WTC11 (cell line): ENCODE measurements at regions of chrX and their contacts with region 1.

Region 1: GRCh38 chrX:154370882-154371770 is 3.3 kb downstream of the FLNA start:
- DNase-seq: peak; percentile 89
- ATAC-seq: peak; percentile 40
- H3K4me3 Mint-ChIP-seq: peak overlapping the region; percentile 75
- H3K27ac Mint-ChIP-seq: 0 out of 2 replicates have a peak overlapping the region, but pooled peaks have one; percentile 45
- H3K4me1 Mint-ChIP-seq: peaks cover 11% of the 10 kb centered on the region
- H3K27me3 Mint-ChIP-seq: peaks cover 6% of the 10 kb centered on the region
- CTCF ChIP-seq: no peak

Region 2: GRCh38 chrX:154298312-154298711 is 72.8 kb before region 1 on chrX:
- CTCF ChIA-PET with region 1: no interaction called
- POLR2A ChIA-PET with region 1: no interaction called
- DNase-seq: no peak
- ATAC-seq: no peak
- H3K4me3 Mint-ChIP-seq: no peak overlapping the region
- H3K27ac Mint-ChIP-seq: no peak overlapping the region
- H3K4me1 Mint-ChIP-seq: no peaks in the 10 kb centered on the region
- H3K27me3 Mint-ChIP-seq: no peaks in the 10 kb centered on the region
- CTCF ChIP-seq: no peak

Region 3: DNA sequence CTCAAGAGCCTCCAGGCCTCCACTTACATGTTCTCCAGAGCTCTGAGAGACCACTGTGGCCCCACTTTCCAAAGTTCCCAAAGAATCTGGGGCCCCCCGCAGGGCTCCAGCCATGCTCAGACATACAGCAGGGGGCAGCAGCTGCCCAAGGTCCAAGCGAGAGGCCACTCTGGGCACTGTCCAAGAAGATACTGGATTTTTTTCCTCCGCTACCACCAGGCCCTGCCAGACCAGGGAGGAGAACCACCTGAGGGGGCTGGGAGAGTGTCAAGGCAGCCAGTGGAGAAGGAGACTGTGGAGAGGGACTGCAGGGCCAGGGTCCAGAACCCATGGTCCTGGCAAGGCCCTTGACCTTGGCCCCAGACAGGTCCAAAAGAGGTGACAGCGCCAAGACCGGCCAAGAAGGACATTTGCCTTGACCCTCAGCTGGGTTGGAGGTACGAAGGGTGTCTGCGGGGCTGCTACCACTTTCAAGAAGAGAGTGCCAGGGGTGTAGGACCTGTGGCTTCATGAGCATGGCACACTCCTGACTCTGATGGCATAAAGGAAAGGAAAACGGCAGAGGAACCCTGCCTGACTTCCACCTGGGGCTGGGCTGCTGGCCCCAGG is 13.3 kb after region 1 on chrX:
- CTCF ChIA-PET with region 1: interaction called, 43 read pairs
- POLR2A ChIA-PET with region 1: interaction called, 13 read pairs
- DNase-seq: no peak
- ATAC-seq: no peak
- H3K4me3 Mint-ChIP-seq: no peak overlapping the region
- H3K27ac Mint-ChIP-seq: no peak overlapping the region
- H3K4me1 Mint-ChIP-seq: peaks cover 26% of the 10 kb centered on the region
- H3K27me3 Mint-ChIP-seq: no peaks in the 10 kb centered on the region
- CTCF ChIP-seq: no peak

Region 4: GRCh38 chrX:154411322-154411980 is 40.3 kb after region 1 on chrX and contains the start of gene TAFAZZIN:
- CTCF ChIA-PET with region 1: interaction called, 10 read pairs
- POLR2A ChIA-PET with region 1: no interaction called
- DNase-seq: peak; percentile 60
- ATAC-seq: peak; percentile 8; the same call in 1 of the 2 replicates
- H3K4me3 Mint-ChIP-seq: peak within 1 kb of the TSS; percentile 87
- H3K27ac Mint-ChIP-seq: peak within 1 kb of the TSS; percentile 88; the same call in 1 of the 2 replicates
- H3K4me1 Mint-ChIP-seq: peaks cover 12% of the 10 kb centered on the region
- H3K27me3 Mint-ChIP-seq: no peaks in the 10 kb centered on the region
- CTCF ChIP-seq: no peak
- total RNA-seq, gene TAFAZZIN: 43.5 to 48.6 TPM (median 44.5 TPM) in 3 replicates

Region 5: DNA sequence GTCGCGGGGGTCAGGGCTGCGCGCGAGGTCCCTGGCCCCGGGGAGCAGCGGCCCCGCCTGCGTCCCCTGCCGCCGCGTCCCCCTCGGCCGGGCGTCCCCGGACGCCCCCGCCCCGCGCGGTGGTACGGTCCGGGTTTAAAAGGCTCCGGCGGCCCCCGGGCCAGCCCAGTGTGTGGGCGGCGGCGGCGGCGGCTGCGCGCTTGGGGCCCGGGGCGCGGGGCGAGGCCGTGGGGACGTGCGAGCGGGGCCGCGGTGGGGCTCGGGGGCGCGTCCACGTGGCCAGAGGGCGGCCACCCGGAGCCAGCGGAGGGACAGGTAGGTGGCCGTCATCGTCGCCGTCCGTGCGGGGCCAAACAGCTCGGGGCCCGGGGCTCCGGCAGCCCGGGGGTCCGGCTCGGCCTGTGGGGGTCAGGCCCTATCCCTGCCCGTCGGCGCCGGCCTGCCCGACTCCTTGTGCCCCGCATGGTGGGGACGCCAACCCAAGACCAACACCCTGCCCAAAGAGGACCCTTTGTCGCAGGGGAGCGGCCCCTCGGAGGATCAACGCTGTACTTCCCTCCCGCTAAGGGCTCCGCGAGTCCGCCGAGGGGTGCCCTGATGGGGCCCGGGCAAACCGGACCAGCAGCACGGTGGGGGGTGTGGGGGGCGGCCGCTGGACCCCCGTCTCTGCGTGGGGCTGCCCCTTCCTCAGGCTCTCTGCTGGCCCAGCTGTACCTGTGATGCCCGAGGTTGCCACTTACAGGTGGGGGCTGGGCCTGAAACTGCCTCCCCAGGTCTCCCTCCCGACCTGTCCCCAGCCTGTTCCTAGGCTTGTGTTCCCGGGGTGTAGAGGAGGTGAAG is 87.2 kb after region 1 on chrX and contains the start of gene PLXNA3:
- CTCF ChIA-PET with region 1: interaction called, 11 read pairs
- POLR2A ChIA-PET with region 1: interaction called, 3 read pairs
- DNase-seq: peak; percentile 47
- ATAC-seq: peak; percentile 61
- H3K4me3 Mint-ChIP-seq: peak within 1 kb of the TSS; percentile 84
- H3K27ac Mint-ChIP-seq: peak within 1 kb of the TSS; percentile 81; the same call in 1 of the 2 replicates
- H3K4me1 Mint-ChIP-seq: no peaks in the 10 kb centered on the region
- H3K27me3 Mint-ChIP-seq: peaks cover 15% of the 10 kb centered on the region
- CTCF ChIP-seq: no peak
- total RNA-seq, gene PLXNA3: 26.6 to 33.1 TPM (median 31.4 TPM) in 3 replicates

Region 6: DNA sequence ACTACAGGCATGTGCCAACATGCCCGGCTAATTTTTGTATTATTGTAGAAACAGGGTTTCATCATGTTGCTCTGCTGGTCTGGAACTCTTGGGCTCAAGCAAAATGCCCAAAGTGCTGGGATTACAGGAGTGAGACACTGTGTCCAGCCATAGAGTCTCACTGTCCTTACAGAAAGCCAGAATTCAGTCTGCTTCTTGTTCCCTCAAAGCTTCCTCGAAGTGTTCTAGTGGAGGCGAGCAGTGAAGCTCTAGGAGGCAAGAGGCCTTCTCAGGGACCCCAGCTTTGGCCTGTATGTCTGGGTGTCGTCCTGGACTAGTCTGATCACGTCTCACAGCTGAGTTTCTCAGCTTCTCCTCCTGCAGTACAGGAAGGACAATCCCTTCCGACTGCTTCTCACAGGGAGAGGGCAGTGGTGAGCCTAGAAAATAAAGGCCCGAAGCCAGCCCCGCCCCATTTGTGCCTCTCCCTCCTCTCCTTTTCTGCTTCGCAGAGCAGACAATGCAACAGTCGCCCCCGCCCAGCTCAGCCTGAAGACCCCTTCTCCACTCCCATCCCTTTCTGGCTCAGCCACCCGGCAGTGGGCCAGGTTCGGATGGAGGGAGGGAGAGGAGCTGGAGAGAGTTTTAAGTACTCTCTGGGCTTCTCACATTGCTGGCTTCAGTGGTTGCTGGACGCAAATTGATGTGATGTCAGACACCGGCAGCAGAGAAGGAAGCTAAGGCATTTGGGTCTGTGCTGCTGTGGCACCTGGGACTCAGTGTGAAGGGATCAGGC is 156.0 kb after region 1 on chrX:
- CTCF ChIA-PET with region 1: interaction called, 20 read pairs
- POLR2A ChIA-PET with region 1: no interaction called
- DNase-seq: peak; percentile 73
- ATAC-seq: peak; percentile 95
- H3K4me3 Mint-ChIP-seq: peak overlapping the region; percentile 54
- H3K27ac Mint-ChIP-seq: no peak overlapping the region
- H3K4me1 Mint-ChIP-seq: peaks cover 10% of the 10 kb centered on the region; the same call in 1 of the 2 replicates
- H3K27me3 Mint-ChIP-seq: peaks cover 43% of the 10 kb centered on the region
- CTCF ChIP-seq: no peak